ENCODE measurements at regions of chr11 and their contacts with region 1.

Region 1: GRCh38 chr11:69540118-69540502 is 58.6 kb downstream of the LINC01488 start:
- DNase-seq: peak; percentile 92 to 93
- ATAC-seq: peak; percentile 83
- H3K4me3 ChIP-seq: no peak overlapping the region
- H3K27ac ChIP-seq: peak overlapping the region; percentile 1 to 84
- H3K4me1 ChIP-seq: no peaks in the 10 kb centered on the region
- H3K27me3 ChIP-seq: no peaks in the 10 kb centered on the region

Region 2: GRCh38 chr11:69497221-69497787 is 42.8 kb before region 1 on chr11:
- intact Hi-C with region 1: loop called in 1 of 2 experiments (anchors 2 kb)
- DNase-seq: peak; percentile 87 to 93
- ATAC-seq: peak; percentile 90
- H3K4me3 ChIP-seq: no peak overlapping the region
- H3K27ac ChIP-seq: no peak overlapping the region
- H3K4me1 ChIP-seq: no peaks in the 10 kb centered on the region
- H3K27me3 ChIP-seq: no peaks in the 10 kb centered on the region

Measured in aorta (tissue), 5 donors.